Activated CD8-positive, alpha-beta T cell treated with anti-CD3 and anti-CD28 coated beads, Interleukin-2, amount 10 ng/mL, durations not matched to agents 7 days and 5 days (primary cell): ENCODE measurements at regions of chrX and their contacts with region 1.

Region 1: DNA sequence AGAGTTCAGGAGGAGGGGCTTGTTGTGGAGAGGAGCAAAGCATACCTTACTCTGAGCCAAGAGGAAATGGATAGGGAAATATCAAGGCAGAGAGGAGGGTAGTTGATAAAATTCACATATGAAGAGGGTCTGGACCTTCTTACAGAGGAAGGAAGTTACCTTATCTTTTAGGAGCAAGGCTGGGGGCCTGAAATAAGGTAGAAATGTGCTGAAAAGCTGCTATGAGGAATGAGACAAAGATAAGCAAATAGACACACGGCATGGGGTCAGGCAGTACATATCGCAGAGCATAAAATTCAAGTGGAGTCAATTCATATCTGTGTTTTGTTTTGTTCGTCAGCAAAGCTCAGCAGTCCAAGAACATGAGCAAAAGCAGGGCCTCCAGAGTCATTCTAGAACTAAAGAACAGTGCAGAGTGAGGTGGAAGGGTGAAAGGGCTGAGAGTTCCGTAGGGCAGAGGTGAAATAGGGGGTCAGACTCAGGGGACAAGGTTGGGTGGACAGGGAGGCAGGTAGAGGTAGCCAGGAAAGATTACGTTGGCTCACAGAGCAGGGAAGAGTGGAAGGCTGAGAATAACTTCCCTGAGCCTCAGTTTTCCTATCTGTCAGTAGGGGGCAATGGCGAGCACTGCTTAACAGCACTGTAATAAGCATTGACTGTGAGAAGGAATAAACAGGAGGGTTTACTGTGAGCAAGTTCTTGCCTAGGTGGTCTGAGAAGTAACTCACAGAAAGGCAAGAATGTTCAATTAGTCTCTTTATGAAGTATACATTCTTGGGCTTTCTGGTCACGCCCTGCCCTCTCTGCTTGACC is 9.2 kb downstream of the VSIG4 start:
- DNase-seq: peak; percentile 34
- ATAC-seq: peak; percentile 55
- H3K4me3 Mint-ChIP-seq: no peak overlapping the region
- H3K27ac Mint-ChIP-seq: no peak overlapping the region
- H3K4me1 Mint-ChIP-seq: peaks cover 16% of the 10 kb centered on the region
- H3K27me3 Mint-ChIP-seq: no peaks in the 10 kb centered on the region

Region 2: DNA sequence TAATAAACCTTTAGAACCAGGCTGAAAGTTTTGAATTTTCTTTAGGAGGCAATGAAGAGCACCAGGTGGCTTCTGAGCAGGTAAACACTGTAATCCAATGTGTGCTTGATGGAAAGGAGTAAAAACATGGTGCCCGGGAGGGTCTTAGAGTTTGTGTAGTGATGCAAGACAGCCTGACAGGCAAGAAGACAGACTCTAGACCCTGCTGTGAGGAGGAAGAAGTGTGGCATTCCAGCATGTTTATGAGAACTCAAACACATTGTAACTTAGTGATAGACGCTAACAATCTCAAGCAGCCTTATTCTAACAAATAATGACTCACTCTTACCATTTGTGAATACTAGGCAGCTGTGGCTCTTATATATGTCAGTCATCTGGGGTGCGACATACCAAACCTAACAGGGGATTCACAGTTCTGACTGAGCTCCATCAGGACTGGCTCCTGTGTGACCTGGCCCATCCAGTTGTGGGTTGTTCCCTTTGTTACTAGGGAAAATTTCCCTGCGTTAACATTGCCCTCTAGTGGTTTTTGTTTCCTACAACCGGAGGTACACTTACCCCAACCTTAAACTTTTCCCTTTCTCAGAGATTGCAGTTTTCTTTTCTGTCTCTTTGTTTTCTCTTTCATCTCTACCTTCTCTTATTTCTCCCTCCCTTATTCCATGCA is 44.7 kb before region 1 on chrX:
- CTCF ChIA-PET with region 1: no interaction called
- POLR2A ChIA-PET with region 1: no interaction called
- DNase-seq: peak; percentile 59
- ATAC-seq: peak; percentile 93
- H3K4me3 Mint-ChIP-seq: no peak overlapping the region
- H3K27ac Mint-ChIP-seq: peak overlapping the region; percentile 76
- H3K4me1 Mint-ChIP-seq: peaks cover 38% of the 10 kb centered on the region
- H3K27me3 Mint-ChIP-seq: no peaks in the 10 kb centered on the region

Region 3: GRCh38 chrX:66015900-66016689 is 14.6 kb before region 1 on chrX:
- CTCF ChIA-PET with region 1: interaction called, 26 read pairs
- POLR2A ChIA-PET with region 1: interaction called, 4 read pairs
- DNase-seq: peak; percentile 30
- ATAC-seq: peak; percentile 49
- H3K4me3 Mint-ChIP-seq: peak overlapping the region; percentile 68
- H3K27ac Mint-ChIP-seq: peak overlapping the region; percentile 89
- H3K4me1 Mint-ChIP-seq: peaks cover 88% of the 10 kb centered on the region
- H3K27me3 Mint-ChIP-seq: no peaks in the 10 kb centered on the region

Region 4: GRCh38 chrX:66053414-66053813 is 22.7 kb after region 1 on chrX:
- CTCF ChIA-PET with region 1: no interaction called
- POLR2A ChIA-PET with region 1: no interaction called
- DNase-seq: no peak
- ATAC-seq: no peak
- H3K4me3 Mint-ChIP-seq: no peak overlapping the region
- H3K27ac Mint-ChIP-seq: no peak overlapping the region
- H3K4me1 Mint-ChIP-seq: peaks cover 3% of the 10 kb centered on the region
- H3K27me3 Mint-ChIP-seq: no peaks in the 10 kb centered on the region

Region 5: GRCh38 chrX:66064261-66064660 is 33.5 kb after region 1 on chrX:
- CTCF ChIA-PET with region 1: no interaction called
- POLR2A ChIA-PET with region 1: no interaction called
- DNase-seq: no peak
- ATAC-seq: no peak
- H3K4me3 Mint-ChIP-seq: no peak overlapping the region
- H3K27ac Mint-ChIP-seq: no peak overlapping the region
- H3K4me1 Mint-ChIP-seq: peaks cover 30% of the 10 kb centered on the region
- H3K27me3 Mint-ChIP-seq: no peaks in the 10 kb centered on the region

Region 6: DNA sequence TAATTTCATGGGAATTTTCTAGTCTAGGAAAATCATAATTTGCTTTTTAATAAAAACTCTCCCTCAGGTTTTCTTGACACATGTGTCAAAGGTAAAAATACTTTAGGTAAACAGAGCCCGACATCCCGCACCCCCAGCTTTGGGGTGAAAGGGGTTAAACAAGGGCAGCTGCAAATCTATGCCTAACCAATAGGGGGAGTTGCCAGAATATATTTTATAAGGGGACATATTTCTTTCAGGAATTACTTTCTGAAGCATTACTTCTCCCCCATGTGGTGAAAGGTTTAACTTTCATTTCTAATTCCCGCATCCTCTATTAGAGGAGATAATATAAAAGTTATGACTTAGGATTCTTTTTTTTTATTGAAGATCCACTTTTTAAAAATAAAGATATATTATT is 79.4 kb after region 1 on chrX:
- CTCF ChIA-PET with region 1: interaction called, 11 read pairs
- POLR2A ChIA-PET with region 1: no interaction called
- DNase-seq: no peak
- ATAC-seq: no peak
- H3K4me3 Mint-ChIP-seq: no peak overlapping the region
- H3K27ac Mint-ChIP-seq: no peak overlapping the region
- H3K4me1 Mint-ChIP-seq: peaks cover 14% of the 10 kb centered on the region
- H3K27me3 Mint-ChIP-seq: peaks cover 5% of the 10 kb centered on the region